AG04450 (cell line): ENCODE measurements at regions of chr19 and their contacts with region 1.

Region 1: GRCh38 chr19:3102228-3103140 is 8.3 kb downstream of the GNA11 start:
- DNase-seq: no peak
- H3K4me3 ChIP-seq: no peak overlapping the region
- H3K27ac ChIP-seq: no peak overlapping the region
- H3K27me3 ChIP-seq: no peaks in the 10 kb centered on the region
- CTCF ChIP-seq: no peak

Region 2: DNA sequence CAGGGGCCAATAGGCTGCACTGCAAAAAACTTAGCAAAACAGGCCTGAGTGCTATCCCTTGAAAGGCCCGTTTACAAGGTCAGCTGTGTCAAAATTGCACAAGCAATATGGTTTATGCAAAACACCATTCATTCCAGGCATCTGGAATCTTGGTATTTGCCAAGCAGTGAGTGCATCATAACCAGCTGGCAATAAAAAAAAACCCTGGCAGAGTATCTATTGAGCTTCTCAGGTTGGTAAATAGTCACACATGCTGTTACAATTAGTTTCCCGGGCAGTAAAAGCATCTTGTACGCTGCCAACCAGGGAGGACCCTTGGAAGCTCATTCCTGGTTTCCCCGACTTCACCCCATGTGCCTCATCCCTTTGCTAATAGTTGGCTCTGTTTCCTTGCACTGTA is 179.0 kb before region 1 on chr19:
- CTCF ChIA-PET with region 1: interaction called, 10 read pairs
- POLR2A ChIA-PET with region 1: no interaction called
- DNase-seq: no peak
- H3K4me3 ChIP-seq: no peak overlapping the region
- H3K27ac ChIP-seq: no peak overlapping the region
- H3K27me3 ChIP-seq: no peaks in the 10 kb centered on the region
- CTCF ChIP-seq: no peak

Region 3: DNA sequence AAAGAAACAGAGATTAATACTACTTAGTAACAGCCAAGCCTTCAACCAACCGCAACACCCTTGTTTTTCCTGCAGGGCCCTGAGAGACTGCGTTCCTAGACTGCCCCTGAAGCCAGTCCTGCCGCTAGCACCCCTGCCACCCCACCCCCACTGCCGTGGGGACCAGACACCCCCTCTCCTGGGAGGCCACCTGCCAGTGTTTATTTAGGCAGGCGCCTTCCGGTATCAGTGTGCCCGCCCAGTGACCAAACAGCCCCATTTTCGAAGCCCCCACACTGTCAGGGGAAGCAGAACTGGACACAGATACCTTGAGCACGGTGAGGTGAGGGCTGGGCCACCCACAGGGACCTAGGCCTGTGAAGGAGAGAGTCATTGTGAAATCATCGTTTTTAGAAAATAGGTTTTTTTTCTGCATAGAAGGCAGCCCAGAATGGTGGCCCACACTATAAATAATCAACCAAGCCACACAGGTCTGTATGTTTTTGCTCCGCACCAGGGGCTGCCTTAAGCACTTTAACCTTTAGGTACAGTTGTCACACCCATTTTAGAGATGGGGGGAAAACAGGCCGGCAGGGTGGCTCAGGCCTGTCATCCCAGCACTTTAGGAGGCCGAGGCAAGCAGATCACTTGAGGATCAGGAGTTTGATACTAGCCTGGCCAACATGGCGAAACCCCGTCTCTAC is 36.7 kb before region 1 on chr19:
- CTCF ChIA-PET with region 1: no interaction called
- POLR2A ChIA-PET with region 1: no interaction called
- DNase-seq: no peak
- H3K4me3 ChIP-seq: no peak overlapping the region
- H3K27ac ChIP-seq: no peak overlapping the region
- H3K27me3 ChIP-seq: no peaks in the 10 kb centered on the region
- CTCF ChIP-seq: no peak

Region 4: DNA sequence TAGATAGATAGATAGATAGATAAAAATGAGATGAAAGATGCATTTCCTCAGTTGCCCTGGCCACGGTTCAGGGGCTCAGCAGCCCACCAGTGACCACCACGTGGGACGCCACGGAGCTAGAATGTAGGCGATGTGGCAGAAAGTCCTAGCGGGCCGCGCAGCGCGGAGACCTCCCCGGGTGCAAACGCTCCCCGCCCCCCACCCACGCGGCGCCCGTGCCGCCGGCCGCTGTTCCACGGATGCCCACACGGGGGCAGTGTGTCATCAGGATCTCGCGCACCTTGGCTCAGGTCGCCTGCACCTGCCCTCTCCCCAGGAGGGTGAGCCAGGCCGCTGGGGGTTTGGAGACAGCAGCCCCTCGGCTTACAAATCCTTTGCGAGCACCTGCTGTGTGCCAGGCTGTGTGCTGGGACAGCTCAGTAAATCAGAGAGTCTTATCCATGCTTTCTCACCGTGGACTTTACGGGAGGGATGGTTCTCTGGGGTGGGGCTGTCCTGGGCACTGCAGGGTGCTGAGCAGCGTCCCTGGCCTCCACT is 26.5 kb before region 1 on chr19:
- CTCF ChIA-PET with region 1: interaction called, 14 read pairs
- POLR2A ChIA-PET with region 1: no interaction called
- DNase-seq: no peak
- H3K4me3 ChIP-seq: peak overlapping the region; percentile 43
- H3K27ac ChIP-seq: no peak overlapping the region
- H3K27me3 ChIP-seq: no peaks in the 10 kb centered on the region
- CTCF ChIP-seq: peak; percentile 85

Region 5: GRCh38 chr19:3163230-3163886 is 60.9 kb after region 1 on chr19:
- CTCF ChIA-PET with region 1: no interaction called
- POLR2A ChIA-PET with region 1: no interaction called
- DNase-seq: peak; percentile 30
- H3K4me3 ChIP-seq: no peak overlapping the region
- H3K27ac ChIP-seq: no peak overlapping the region
- H3K27me3 ChIP-seq: no peaks in the 10 kb centered on the region
- CTCF ChIP-seq: peak; percentile 95